ENCODE measurements at regions of chr4 and their contacts with region 1.

Region 1: GRCh38 chr4:139651282-139652194 is 14.1 kb upstream of the MGST2 start:
- DNase-seq: peak; percentile 25 to 81 (median 64)
- ATAC-seq: peak; percentile 83
- H3K4me3 ChIP-seq: no peak overlapping the region
- H3K4me3 Mint-ChIP-seq: peak overlapping the region; percentile 0
- H3K27ac ChIP-seq: no peak overlapping the region
- H3K27ac Mint-ChIP-seq: no peak overlapping the region
- H3K4me1 ChIP-seq: no peaks in the 10 kb centered on the region
- H3K4me1 Mint-ChIP-seq: peaks cover 4% of the 10 kb centered on the region
- H3K27me3 ChIP-seq: no peaks in the 10 kb centered on the region
- H3K27me3 Mint-ChIP-seq: peaks cover 2% of the 10 kb centered on the region
- CTCF ChIP-seq: peak; percentile 91

Region 2: DNA sequence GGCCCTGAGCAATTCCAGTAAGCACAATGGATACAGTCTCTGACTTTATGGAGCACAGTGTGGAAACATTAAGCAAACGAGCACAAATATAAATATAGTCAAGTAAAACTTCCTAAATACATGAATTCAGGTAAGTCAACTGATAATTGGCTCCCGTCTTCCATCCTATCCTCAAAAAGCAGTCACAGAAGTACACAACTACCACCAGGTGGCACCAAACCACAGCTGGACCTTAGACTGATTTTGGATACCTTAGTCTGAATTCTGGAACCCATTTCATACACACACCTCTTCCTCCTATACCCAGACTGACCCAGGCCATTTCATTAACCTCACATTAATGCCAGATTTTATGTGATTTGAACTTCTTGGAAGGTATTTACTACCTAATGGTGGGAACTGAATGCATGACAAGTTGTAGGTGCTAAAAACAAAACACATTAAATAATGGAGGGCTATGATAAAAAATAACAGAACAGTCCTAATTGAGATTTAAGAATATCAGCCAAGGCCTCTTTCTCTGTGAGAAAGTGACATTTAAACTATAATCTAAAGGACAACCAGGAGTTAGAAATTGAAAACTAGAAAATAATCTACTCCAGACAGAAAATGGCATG is 552.1 kb before region 1 on chr4:
- CTCF ChIA-PET with region 1: no interaction called
- POLR2A ChIA-PET with region 1: no interaction called
- intact Hi-C with region 1: loop called in 1 of 2 experiments (anchors 2 kb)
- DNase-seq: peak; percentile 37 to 89 (median 75)
- ATAC-seq: peak; percentile 80
- H3K4me3 ChIP-seq: no peak overlapping the region
- H3K4me3 Mint-ChIP-seq: no peak overlapping the region
- H3K27ac ChIP-seq: no peak overlapping the region
- H3K27ac Mint-ChIP-seq: no peak overlapping the region
- H3K4me1 ChIP-seq: no peaks in the 10 kb centered on the region
- H3K4me1 Mint-ChIP-seq: peaks cover 2% of the 10 kb centered on the region
- H3K27me3 ChIP-seq: no peaks in the 10 kb centered on the region
- H3K27me3 Mint-ChIP-seq: no peaks in the 10 kb centered on the region
- CTCF ChIP-seq: peak; percentile 76

Region 3: DNA sequence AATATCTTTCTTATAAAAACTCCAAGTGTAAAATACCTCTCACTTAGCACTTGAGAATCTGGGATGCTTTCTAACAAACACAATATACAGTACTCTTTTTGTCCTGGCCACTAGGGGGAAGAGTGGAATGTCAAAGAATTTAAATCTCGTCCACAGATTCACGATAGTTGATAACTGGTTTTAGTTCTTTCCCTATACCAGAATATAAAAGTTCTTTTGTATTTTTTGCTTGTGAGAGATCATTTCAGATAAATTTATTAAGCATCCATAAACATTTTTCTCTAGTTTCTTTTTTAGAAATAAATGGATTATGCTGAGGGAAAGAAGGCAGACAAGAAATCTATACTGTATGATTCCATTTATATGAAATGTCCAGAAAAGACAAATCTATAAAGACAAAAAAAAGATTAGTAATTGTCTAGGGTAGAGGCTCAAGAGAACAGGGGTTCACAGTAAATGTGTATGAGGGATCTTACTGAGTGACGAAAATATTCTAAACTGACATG is 422.0 kb before region 1 on chr4:
- CTCF ChIA-PET with region 1: no interaction called
- POLR2A ChIA-PET with region 1: no interaction called
- intact Hi-C with region 1: loop called in 1 of 2 experiments (anchors 5 kb)
- DNase-seq: peak in 3 of 9 experiments; percentile 7 to 74 (median 64)
- ATAC-seq: peak; percentile 70
- H3K4me3 ChIP-seq: no peak overlapping the region
- H3K4me3 Mint-ChIP-seq: no peak overlapping the region
- H3K27ac ChIP-seq: no peak overlapping the region
- H3K27ac Mint-ChIP-seq: no peak overlapping the region
- H3K4me1 ChIP-seq: no peaks in the 10 kb centered on the region
- H3K4me1 Mint-ChIP-seq: no peaks in the 10 kb centered on the region
- H3K27me3 ChIP-seq: no peaks in the 10 kb centered on the region
- H3K27me3 Mint-ChIP-seq: no peaks in the 10 kb centered on the region
- CTCF ChIP-seq: peak; percentile 72

Region 4: DNA sequence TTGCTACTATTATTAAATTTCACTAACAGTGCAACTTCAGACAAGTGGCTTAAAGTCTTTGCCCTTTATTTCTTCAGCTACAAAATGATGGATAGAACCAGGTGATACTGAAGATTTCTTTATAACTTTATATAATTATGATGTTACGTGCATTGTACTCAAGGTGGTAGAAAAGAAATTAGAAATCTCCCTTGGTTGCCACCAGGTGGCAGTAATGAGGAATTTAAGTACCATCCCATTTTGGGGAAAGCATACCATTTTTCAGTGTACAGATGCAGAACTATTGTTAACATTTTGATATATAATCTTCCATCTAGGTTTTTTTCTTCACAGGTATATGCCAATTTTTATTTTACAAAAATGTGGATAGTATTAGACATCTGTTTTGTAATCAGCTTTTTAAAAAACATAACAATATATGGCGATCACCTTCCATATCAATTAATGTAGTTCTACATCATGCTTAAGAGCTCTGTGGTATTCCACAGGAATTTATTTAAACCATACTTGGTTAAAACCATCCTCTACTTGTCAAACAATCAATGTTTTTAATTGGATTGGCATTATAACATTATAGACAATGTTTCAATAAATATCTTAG is 235.4 kb before region 1 on chr4:
- CTCF ChIA-PET with region 1: interaction called, 5 read pairs
- POLR2A ChIA-PET with region 1: no interaction called
- intact Hi-C with region 1: loop called (anchors 2 to 10 kb)
- DNase-seq: peak in 3 of 9 experiments; percentile 28 to 73 (median 64)
- ATAC-seq: peak; percentile 58
- H3K4me3 ChIP-seq: no peak overlapping the region
- H3K4me3 Mint-ChIP-seq: no peak overlapping the region
- H3K27ac ChIP-seq: no peak overlapping the region
- H3K27ac Mint-ChIP-seq: no peak overlapping the region
- H3K4me1 ChIP-seq: no peaks in the 10 kb centered on the region
- H3K4me1 Mint-ChIP-seq: peaks cover 12% of the 10 kb centered on the region
- H3K27me3 ChIP-seq: no peaks in the 10 kb centered on the region
- H3K27me3 Mint-ChIP-seq: no peaks in the 10 kb centered on the region
- CTCF ChIP-seq: peak; percentile 81

Region 5: DNA sequence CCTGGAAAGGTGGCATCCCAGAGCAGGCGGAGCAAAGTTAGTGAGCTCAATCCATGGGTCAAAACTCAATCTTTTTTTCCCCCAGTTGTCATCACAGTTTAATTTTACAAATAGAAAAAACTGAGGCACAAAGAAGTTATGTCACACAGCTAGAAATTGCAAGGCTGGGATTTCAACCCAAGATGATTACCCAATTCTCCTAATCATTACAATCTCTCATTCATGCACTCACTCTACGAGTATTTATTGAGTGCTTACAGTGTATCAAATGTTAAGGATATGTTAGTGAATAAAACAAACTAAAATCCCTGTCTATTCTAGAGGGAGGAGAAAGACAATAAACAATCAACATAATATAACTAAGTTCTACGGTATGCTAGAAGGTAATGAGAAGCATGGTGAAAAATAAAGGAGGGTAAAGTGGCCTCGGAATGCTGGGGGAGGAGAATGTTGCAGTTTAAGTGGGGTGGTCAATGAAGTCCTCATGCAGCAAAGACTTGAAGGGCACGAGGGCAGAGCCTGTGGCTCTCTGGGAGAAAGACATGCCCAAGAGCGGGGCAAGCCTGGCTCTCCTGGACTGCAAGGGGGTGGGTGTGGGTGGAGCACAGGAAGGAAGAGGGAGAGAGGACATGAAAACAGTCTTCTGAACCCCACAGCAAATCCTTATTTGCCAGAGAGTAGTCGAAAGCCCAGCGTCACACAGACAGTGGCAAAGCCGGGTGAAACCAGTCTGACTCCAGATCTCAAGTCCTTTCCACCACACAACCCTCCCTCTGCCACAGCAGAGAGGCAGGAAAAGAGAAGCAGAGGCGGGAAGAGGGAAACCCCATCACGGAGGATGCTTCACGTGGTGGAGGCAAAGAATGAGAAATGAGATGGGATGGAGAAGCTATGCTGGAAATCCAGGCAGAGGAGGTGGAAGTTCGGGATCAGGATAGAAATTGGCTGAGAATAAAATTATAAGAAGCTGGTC is 149.3 kb before region 1 on chr4:
- CTCF ChIA-PET with region 1: interaction called, 17 read pairs
- POLR2A ChIA-PET with region 1: no interaction called
- intact Hi-C with region 1: loop called (anchors 2 kb)
- DNase-seq: no peak
- ATAC-seq: no peak
- H3K4me3 ChIP-seq: no peak overlapping the region
- H3K4me3 Mint-ChIP-seq: no peak overlapping the region
- H3K27ac ChIP-seq: no peak overlapping the region
- H3K27ac Mint-ChIP-seq: no peak overlapping the region
- H3K4me1 ChIP-seq: no peaks in the 10 kb centered on the region
- H3K4me1 Mint-ChIP-seq: no peaks in the 10 kb centered on the region
- H3K27me3 ChIP-seq: no peaks in the 10 kb centered on the region
- H3K27me3 Mint-ChIP-seq: peaks cover 6% of the 10 kb centered on the region
- CTCF ChIP-seq: no peak

Region 6: GRCh38 chr4:139564502-139564901 is 87.0 kb before region 1 on chr4:
- CTCF ChIA-PET with region 1: no interaction called
- POLR2A ChIA-PET with region 1: no interaction called
- intact Hi-C with region 1: no loop called
- DNase-seq: peak in 3 of 9 experiments; percentile 15 to 32 (median 23)
- ATAC-seq: peak; percentile 19
- H3K4me3 ChIP-seq: no peak overlapping the region
- H3K4me3 Mint-ChIP-seq: no peak overlapping the region
- H3K27ac ChIP-seq: no peak overlapping the region
- H3K27ac Mint-ChIP-seq: no peak overlapping the region
- H3K4me1 ChIP-seq: peaks cover 4% of the 10 kb centered on the region
- H3K4me1 Mint-ChIP-seq: peaks cover 12% of the 10 kb centered on the region
- H3K27me3 ChIP-seq: no peaks in the 10 kb centered on the region
- H3K27me3 Mint-ChIP-seq: no peaks in the 10 kb centered on the region
- CTCF ChIP-seq: no peak

Region 7: DNA sequence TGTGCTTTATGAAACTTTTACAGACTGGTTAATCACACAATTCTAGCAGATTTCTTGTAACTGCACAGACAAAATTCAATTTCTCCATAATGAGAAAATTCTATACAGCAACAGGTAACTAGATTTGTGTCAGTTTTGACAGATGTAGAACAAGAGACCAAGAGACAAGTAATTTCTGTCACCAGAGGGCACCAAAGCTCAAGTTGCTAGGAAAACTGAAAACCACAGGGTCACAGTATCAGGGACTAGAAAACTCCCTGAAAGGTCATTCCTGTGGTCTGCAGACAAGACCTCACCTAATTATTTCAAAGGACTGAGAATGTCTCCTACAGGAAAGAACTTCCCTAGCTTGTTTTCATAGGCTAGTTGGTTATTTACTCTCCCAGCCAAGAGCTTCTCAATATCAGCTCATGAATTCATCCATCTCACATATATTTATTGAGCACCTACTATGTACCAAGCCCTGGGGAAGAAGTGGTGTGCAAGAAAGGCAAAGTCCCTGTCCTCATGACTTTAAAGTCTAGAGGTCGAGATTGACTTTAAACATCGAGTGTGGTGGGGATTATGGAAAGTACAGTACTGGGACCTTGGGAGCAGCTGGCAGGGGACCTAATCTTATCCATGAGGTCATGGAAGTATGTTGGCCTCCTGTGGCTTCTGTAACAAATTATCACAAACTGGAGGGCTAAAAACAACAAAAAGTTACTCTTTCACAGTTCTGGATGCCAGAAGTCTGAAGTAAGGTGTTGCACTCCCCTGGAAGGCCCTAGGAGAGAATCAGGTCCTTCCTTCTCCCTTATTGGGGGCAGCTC is 47.8 kb before region 1 on chr4:
- CTCF ChIA-PET with region 1: interaction called, 71 read pairs
- POLR2A ChIA-PET with region 1: no interaction called
- intact Hi-C with region 1: loop called (anchors 1 kb)
- DNase-seq: peak in 4 of 9 experiments; percentile 17 to 60 (median 42)
- ATAC-seq: peak; percentile 34
- H3K4me3 ChIP-seq: no peak overlapping the region
- H3K4me3 Mint-ChIP-seq: no peak overlapping the region
- H3K27ac ChIP-seq: no peak overlapping the region
- H3K27ac Mint-ChIP-seq: no peak overlapping the region
- H3K4me1 ChIP-seq: no peaks in the 10 kb centered on the region
- H3K4me1 Mint-ChIP-seq: peaks cover 19% of the 10 kb centered on the region
- H3K27me3 ChIP-seq: no peaks in the 10 kb centered on the region
- H3K27me3 Mint-ChIP-seq: peaks cover 24% of the 10 kb centered on the region
- CTCF ChIP-seq: peak; percentile 47

Region 8: DNA sequence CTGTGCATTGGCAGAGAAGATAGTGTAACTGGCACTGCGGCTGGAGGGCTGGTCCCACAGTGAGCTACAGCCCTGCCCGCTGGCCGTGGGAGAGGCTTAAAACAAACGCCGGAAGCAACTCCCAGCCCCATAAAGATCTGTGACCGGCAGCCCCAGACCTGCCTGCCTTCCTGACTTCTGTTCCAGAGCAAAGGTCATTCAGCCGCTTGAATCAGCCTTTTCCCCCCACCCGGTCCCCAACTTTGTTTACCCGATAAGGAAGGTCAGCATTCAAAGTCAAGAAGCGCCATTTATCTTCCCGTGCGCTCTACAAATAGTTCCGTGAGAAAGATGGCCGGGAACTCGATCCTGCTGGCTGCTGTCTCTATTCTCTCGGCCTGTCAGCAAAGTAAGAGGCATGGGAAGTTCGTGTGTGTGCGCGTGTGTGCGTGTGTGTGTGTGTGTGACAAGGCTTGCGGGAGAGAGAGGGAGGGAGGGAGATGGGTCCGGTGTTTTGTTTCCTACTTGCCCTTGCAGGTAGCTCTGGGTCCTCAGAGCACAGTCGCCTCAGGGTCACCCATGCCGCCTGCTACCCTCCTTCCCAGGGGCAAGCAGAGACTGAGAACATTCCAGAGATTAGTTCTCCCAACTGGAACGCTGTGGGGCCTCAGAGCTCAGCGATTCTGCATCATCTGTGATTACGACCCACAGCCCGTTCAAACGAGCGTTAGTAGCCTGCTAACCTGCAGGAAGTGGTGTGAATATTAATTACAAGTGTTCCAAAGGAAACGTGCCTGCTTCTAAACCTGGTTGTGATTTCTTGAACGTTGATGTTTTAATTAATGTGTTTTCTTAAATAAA is 14.4 kb after region 1 on chr4 and contains the start of gene MGST2:
- CTCF ChIA-PET with region 1: interaction called, 24 read pairs
- POLR2A ChIA-PET with region 1: no interaction called
- intact Hi-C with region 1: no loop called
- DNase-seq: peak in 8 of 9 experiments; percentile 6 to 58 (median 29)
- ATAC-seq: peak; percentile 51
- H3K4me3 ChIP-seq: peak within 1 kb of the TSS; percentile 62 to 71
- H3K4me3 Mint-ChIP-seq: peak within 1 kb of the TSS; percentile 92
- H3K27ac ChIP-seq: peak within 1 kb of the TSS; percentile 9 to 20
- H3K27ac Mint-ChIP-seq: peak within 1 kb of the TSS; percentile 70
- H3K4me1 ChIP-seq: peaks cover 6% of the 10 kb centered on the region
- H3K4me1 Mint-ChIP-seq: peaks cover 11% of the 10 kb centered on the region
- H3K27me3 ChIP-seq: no peaks in the 10 kb centered on the region
- H3K27me3 Mint-ChIP-seq: no peaks in the 10 kb centered on the region
- CTCF ChIP-seq: no peak
- total RNA-seq, gene MGST2: 0.54 TPM in 1 of 2 experiments, not detected in the other

Region 9: DNA sequence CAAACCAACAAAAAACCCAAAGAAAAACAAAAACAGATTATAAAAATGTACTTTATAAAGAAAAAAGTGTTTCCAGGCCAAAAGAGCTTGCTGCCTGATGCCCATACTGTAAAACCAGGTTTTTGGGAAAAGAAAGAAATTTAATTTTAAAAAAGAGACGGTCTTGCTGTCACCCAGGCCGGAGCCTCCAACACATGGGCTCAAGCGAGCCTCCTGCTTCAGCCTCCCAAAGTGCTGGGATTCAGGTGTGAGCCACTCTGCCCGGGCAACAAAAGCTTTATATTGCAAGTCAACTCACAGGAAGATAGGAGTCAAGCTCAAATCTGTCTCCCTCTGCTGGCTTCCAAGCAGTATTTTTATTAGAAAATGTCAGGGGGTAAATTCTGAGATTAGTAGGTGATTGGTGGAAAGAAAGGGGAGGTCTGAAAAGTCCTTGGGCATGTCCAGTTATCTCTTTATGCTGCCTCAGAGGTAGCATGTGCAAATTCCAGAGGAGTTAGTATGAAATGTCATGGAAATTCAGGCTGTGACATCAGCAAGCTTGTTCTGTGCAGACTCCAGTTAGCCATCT is 53.5 kb after region 1 on chr4:
- CTCF ChIA-PET with region 1: no interaction called
- POLR2A ChIA-PET with region 1: no interaction called
- intact Hi-C with region 1: no loop called
- DNase-seq: no peak
- ATAC-seq: no peak
- H3K4me3 ChIP-seq: no peak overlapping the region
- H3K4me3 Mint-ChIP-seq: no peak overlapping the region
- H3K27ac ChIP-seq: no peak overlapping the region
- H3K27ac Mint-ChIP-seq: no peak overlapping the region
- H3K4me1 ChIP-seq: no peaks in the 10 kb centered on the region
- H3K4me1 Mint-ChIP-seq: no peaks in the 10 kb centered on the region
- H3K27me3 ChIP-seq: no peaks in the 10 kb centered on the region
- H3K27me3 Mint-ChIP-seq: no peaks in the 10 kb centered on the region
- CTCF ChIP-seq: no peak

Region 10: GRCh38 chr4:140686796-140687195 is 1035.3 kb after region 1 on chr4:
- CTCF ChIA-PET with region 1: no interaction called
- POLR2A ChIA-PET with region 1: no interaction called
- intact Hi-C with region 1: no loop called
- DNase-seq: no peak
- ATAC-seq: no peak
- H3K4me3 ChIP-seq: no peak overlapping the region
- H3K4me3 Mint-ChIP-seq: no peak overlapping the region
- H3K27ac ChIP-seq: no peak overlapping the region
- H3K27ac Mint-ChIP-seq: no peak overlapping the region
- H3K4me1 ChIP-seq: no peaks in the 10 kb centered on the region
- H3K4me1 Mint-ChIP-seq: no peaks in the 10 kb centered on the region
- H3K27me3 ChIP-seq: no peaks in the 10 kb centered on the region
- H3K27me3 Mint-ChIP-seq: peaks cover 11% of the 10 kb centered on the region
- CTCF ChIP-seq: no peak